ENCODE measurements at regions of chr2 and their contacts with region 1.

Region 1: DNA sequence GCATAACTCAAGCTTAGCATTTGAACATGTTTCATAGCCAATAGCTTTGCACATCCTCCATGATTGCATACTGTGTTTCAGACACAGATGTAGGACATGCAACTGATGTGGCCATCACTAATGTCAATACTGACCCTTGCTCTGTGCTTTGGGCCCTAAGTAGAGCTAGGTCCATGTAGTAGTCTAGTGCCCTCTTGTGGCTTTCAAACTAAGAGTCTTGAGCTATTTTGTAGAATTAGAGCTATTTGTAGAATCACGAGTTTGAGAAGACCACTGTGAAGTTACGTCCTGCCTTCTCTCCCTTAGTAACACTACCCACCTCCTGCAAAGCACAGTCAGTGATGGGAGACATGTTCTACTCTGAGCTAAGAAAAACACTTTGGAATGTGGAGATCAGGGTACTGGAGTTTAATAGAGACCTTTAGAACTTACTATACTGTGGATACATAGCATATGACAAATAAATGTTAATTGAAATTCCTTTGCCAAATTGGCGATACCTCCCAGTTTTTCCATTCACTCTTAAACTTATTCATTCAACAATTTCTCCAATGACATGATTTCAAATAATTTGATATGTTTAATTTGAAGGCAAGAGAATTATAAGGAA is 306.5 kb upstream of the TNP1 start:
- DNase-seq: peak; percentile 15
- ATAC-seq: peak; percentile 80
- H3K4me3 ChIP-seq: no peak overlapping the region
- H3K27ac ChIP-seq: no peak overlapping the region
- H3K4me1 ChIP-seq: peaks cover 6% of the 10 kb centered on the region
- H3K27me3 ChIP-seq: no peaks in the 10 kb centered on the region
- CTCF ChIP-seq: peak; percentile 42 to 61 (median 44); a peak in 5 of 6 replicates
- EP300 ChIP-seq: no peak
- POLR2A ChIP-seq: no peak
- RAD21 ChIP-seq: peak; percentile 82

Region 2: DNA sequence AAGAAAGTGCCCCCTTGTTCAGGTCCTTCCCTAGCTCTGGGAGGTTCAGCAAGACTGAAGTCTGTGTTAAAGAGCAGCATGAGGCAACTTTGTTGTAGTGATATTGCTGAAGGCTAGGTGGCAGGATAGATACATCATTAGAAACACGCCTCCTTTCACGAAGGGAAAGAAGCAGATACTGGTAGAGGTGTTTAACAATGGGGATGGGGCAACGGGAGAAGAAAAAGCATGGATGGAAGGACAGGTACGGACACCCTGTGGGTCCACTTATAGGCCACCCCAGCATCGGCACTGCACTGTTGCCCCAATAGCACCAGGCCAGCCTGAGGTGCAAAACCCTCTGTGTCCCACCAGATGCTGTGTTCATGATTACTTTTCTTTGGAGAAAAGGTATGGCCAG is 467.5 kb before region 1 on chr2:
- CTCF ChIA-PET with region 1: interaction called, 5 read pairs
- POLR2A ChIA-PET with region 1: no interaction called
- RAD21 ChIA-PET with region 1: interaction called, 5 read pairs
- SMC1A ChIA-PET with region 1: interaction called, 5 read pairs
- in situ Hi-C with region 1: loop called (anchors 10 kb)
- intact Hi-C with region 1: loop called (anchors 2 kb)
- DNase-seq: no peak
- ATAC-seq: peak; percentile 88
- H3K4me3 ChIP-seq: no peak overlapping the region
- H3K27ac ChIP-seq: no peak overlapping the region
- H3K4me1 ChIP-seq: no peaks in the 10 kb centered on the region
- H3K27me3 ChIP-seq: peaks cover 2 to 12% of the 10 kb centered on the region in 2 experiments; a peak in 3 of 4 replicates
- CTCF ChIP-seq: peak; percentile 60 to 78 (median 66); a peak in 5 of 6 replicates
- EP300 ChIP-seq: no peak
- POLR2A ChIP-seq: no peak
- RAD21 ChIP-seq: peak; percentile 75

Region 3: DNA sequence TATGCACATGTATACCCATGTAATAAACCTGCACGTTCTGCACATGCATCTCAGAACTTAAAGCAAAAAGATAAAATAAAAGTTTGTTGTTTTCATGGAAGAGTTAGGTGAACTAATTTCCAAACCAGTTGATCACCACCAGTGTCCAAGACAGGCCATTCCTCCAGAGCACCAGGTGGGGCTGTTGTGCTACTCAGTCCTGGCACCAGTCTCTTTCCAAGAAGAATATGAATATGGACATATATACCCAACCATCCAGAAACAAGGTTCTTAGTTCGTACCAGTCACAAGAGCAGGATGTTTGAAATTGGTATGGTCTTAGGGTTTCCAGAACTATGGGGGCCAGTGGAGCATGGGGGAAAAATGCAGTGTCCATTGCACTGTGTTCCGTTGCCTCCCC is 289.3 kb before region 1 on chr2:
- CTCF ChIA-PET with region 1: no interaction called
- POLR2A ChIA-PET with region 1: no interaction called
- RAD21 ChIA-PET with region 1: interaction called, 3 read pairs
- SMC1A ChIA-PET with region 1: interaction called, 5 read pairs
- in situ Hi-C with region 1: no loop called
- intact Hi-C with region 1: loop called (anchors 10 kb)
- DNase-seq: no peak
- ATAC-seq: no peak
- H3K4me3 ChIP-seq: no peak overlapping the region
- H3K27ac ChIP-seq: no peak overlapping the region
- H3K4me1 ChIP-seq: no peaks in the 10 kb centered on the region
- H3K27me3 ChIP-seq: no peaks in the 10 kb centered on the region
- CTCF ChIP-seq: peak in 2 of 3 experiments; percentile 20 to 40; a peak in 3 of 6 replicates
- EP300 ChIP-seq: no peak
- POLR2A ChIP-seq: no peak
- RAD21 ChIP-seq: 0 out of 2 replicates have a peak, but pooled peaks have one; percentile 32

Region 4: GRCh38 chr2:216971593-216971992 is 194.8 kb before region 1 on chr2:
- CTCF ChIA-PET with region 1: no interaction called
- POLR2A ChIA-PET with region 1: no interaction called
- RAD21 ChIA-PET with region 1: no interaction called
- SMC1A ChIA-PET with region 1: no interaction called
- in situ Hi-C with region 1: no loop called
- intact Hi-C with region 1: no loop called
- DNase-seq: no peak
- ATAC-seq: no peak
- H3K4me3 ChIP-seq: no peak overlapping the region
- H3K27ac ChIP-seq: no peak overlapping the region
- H3K4me1 ChIP-seq: no peaks in the 10 kb centered on the region
- H3K27me3 ChIP-seq: no peaks in the 10 kb centered on the region; a peak in 1 of 4 replicates
- CTCF ChIP-seq: no peak
- EP300 ChIP-seq: no peak
- POLR2A ChIP-seq: no peak
- RAD21 ChIP-seq: no peak

Region 5: DNA sequence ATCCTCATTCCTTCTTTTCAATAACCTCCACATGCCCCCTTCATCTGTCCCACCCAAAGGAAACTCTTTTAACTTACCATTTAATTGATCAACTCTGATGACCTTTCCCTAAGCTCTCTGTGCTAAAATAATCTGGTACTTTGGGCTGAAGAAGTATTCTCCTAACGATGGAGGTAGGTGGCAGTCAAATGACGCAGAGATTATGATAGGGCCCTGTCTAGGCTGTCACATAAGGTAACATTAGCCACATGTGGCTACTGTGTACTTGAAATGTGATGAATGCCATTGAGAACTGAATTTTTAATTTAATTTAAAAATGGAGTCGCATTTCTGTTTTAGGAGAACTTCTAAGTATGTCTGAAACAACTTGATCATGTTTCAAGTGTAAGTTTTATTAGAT is 165.9 kb before region 1 on chr2:
- CTCF ChIA-PET with region 1: no interaction called
- POLR2A ChIA-PET with region 1: no interaction called
- RAD21 ChIA-PET with region 1: interaction called, 4 read pairs
- SMC1A ChIA-PET with region 1: interaction called, 4 read pairs
- in situ Hi-C with region 1: no loop called
- intact Hi-C with region 1: loop called (anchors 1 kb)
- DNase-seq: no peak
- ATAC-seq: peak; percentile 67; the same call in 2 of the 3 replicates
- H3K4me3 ChIP-seq: no peak overlapping the region
- H3K27ac ChIP-seq: no peak overlapping the region
- H3K4me1 ChIP-seq: no peaks in the 10 kb centered on the region
- H3K27me3 ChIP-seq: no peaks in the 10 kb centered on the region
- CTCF ChIP-seq: peak in 1 of 3 experiments; percentile 38; a peak in 2 of 6 replicates
- EP300 ChIP-seq: no peak
- POLR2A ChIP-seq: no peak
- RAD21 ChIP-seq: peak; percentile 65

Region 6: GRCh38 chr2:217090024-217090473 is 76.3 kb before region 1 on chr2:
- CTCF ChIA-PET with region 1: interaction called, 4 read pairs
- POLR2A ChIA-PET with region 1: no interaction called
- RAD21 ChIA-PET with region 1: interaction called, 3 read pairs
- SMC1A ChIA-PET with region 1: no interaction called
- in situ Hi-C with region 1: no loop called
- intact Hi-C with region 1: loop called (anchors 5 kb)
- DNase-seq: peak; percentile 82
- ATAC-seq: peak; percentile 80
- H3K4me3 ChIP-seq: 0 out of 2 replicates have a peak overlapping the region, but pooled peaks have one; percentile 33
- H3K27ac ChIP-seq: peak overlapping the region; percentile 58; the same call in 1 of the 2 replicates
- H3K4me1 ChIP-seq: peaks cover 28% of the 10 kb centered on the region
- H3K27me3 ChIP-seq: no peaks in the 10 kb centered on the region
- CTCF ChIP-seq: no peak
- EP300 ChIP-seq: peak in 1 of 2 experiments; percentile 89; a peak in 1 of 4 replicates
- POLR2A ChIP-seq: no peak
- RAD21 ChIP-seq: no peak

Region 7: DNA sequence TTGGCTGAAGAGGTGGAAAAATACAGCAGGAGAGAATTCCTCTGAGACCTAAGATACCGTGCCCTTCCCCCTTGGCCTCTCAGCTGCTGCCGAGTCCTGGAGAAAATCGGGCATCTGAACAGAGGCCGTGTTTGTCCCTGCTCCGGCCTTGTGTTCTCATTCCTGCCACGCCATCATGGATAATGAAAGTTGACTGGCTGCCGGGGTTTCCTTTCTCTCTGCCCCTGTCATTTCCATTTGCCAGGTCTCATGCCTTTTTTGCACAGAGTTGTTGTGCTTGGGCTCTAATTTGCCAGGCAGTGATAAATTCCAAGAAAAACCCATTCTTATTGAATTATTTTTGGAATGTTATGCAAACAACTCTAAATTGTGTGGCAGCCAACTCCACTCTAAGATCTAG is 190.4 kb after region 1 on chr2:
- CTCF ChIA-PET with region 1: no interaction called
- POLR2A ChIA-PET with region 1: no interaction called
- RAD21 ChIA-PET with region 1: no interaction called
- SMC1A ChIA-PET with region 1: no interaction called
- in situ Hi-C with region 1: no loop called
- intact Hi-C with region 1: no loop called
- DNase-seq: no peak
- ATAC-seq: no peak
- H3K4me3 ChIP-seq: no peak overlapping the region
- H3K27ac ChIP-seq: no peak overlapping the region
- H3K4me1 ChIP-seq: no peaks in the 10 kb centered on the region
- H3K27me3 ChIP-seq: no peaks in the 10 kb centered on the region
- CTCF ChIP-seq: no peak
- EP300 ChIP-seq: no peak
- POLR2A ChIP-seq: no peak
- RAD21 ChIP-seq: no peak

Region 8: DNA sequence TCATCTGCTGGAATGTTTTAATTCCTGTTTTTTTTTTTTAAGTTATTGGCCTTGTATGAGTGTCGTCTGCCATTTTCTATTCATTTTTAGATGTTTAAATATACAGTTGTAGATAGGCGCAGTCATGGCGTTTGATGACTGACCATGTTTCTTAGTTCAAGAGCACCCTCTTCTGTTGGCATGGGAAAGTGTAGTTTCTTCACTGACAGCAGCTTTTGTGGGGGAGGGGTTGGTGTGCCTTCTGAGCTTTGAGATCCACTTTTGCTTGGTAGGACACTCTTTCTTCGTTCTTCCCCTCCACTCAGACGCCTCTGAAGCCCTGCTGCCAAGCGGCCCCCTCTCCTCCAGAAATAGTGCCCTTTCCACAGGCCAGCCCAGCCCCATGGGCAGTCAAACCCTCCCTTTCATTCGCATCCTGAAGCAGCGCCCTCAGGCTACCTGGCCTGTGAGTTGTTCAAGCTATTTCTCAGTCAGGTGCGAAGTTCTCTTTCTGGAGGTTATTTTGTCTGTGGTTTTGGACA is 344.5 kb after region 1 on chr2:
- CTCF ChIA-PET with region 1: interaction called, 7 read pairs
- POLR2A ChIA-PET with region 1: no interaction called
- RAD21 ChIA-PET with region 1: interaction called, 3 read pairs
- SMC1A ChIA-PET with region 1: interaction called, 5 read pairs
- in situ Hi-C with region 1: no loop called
- intact Hi-C with region 1: loop called (anchors 1 kb)
- DNase-seq: peak; percentile 27
- ATAC-seq: peak; percentile 87
- H3K4me3 ChIP-seq: no peak overlapping the region
- H3K27ac ChIP-seq: no peak overlapping the region
- H3K4me1 ChIP-seq: no peaks in the 10 kb centered on the region
- H3K27me3 ChIP-seq: no peaks in the 10 kb centered on the region
- CTCF ChIP-seq: peak; percentile 68 to 79 (median 78); a peak in 5 of 6 replicates
- EP300 ChIP-seq: no peak
- POLR2A ChIP-seq: no peak
- RAD21 ChIP-seq: peak; percentile 97

Measured in GM12878 (cell line).